ENCODE measurements at regions of chr22 and their contacts with region 1.

Region 1: DNA sequence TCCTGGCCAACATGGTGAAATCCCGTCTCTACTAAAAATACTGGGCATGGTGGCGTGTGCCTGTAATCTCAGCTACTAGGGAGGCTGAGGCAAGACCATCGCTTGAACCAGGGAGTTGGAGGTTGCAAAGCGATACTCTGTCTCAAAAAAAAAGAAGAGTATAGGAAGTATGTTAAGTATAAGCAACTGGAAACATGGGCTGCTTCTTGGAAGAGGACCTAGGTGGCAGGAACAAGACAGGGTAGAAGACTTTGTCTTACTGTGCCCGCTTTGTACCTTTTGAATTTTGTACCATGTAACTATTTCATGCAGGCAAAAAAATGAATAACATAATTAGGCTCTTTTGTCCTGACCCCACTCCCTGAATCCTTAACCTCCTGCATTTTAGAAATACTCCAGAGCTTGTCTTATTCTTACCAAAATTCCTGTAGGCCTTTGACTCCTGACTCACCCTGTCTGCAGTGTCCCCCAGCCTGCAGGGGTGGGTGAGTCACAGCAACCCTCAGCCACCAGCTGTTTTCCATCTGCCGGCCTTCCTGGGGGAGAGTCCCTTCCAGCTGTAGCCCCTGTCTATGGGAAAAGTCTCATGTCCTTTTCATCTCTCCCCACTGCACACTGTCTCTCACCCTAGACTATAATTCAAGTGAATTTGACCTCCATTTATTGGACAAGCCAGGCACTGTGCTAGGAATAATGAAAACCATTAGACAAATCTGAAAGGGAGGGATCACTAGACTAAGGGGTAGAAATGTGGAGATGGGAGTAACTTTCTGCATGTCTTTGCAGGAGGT is 41.8 kb downstream of the TXN2 start:
- DNase-seq: peak in 1 of 2 experiments; percentile 40
- H3K4me3 ChIP-seq: no peak overlapping the region
- H3K4me3 Mint-ChIP-seq: no peak overlapping the region
- H3K27ac Mint-ChIP-seq: peak overlapping the region; percentile 13
- H3K4me1 ChIP-seq: peaks cover 38% of the 10 kb centered on the region
- H3K4me1 Mint-ChIP-seq: peaks cover 33% of the 10 kb centered on the region
- H3K27me3 ChIP-seq: no peaks in the 10 kb centered on the region
- H3K27me3 Mint-ChIP-seq: no peaks in the 10 kb centered on the region
- CTCF ChIP-seq: no peak

Region 2: DNA sequence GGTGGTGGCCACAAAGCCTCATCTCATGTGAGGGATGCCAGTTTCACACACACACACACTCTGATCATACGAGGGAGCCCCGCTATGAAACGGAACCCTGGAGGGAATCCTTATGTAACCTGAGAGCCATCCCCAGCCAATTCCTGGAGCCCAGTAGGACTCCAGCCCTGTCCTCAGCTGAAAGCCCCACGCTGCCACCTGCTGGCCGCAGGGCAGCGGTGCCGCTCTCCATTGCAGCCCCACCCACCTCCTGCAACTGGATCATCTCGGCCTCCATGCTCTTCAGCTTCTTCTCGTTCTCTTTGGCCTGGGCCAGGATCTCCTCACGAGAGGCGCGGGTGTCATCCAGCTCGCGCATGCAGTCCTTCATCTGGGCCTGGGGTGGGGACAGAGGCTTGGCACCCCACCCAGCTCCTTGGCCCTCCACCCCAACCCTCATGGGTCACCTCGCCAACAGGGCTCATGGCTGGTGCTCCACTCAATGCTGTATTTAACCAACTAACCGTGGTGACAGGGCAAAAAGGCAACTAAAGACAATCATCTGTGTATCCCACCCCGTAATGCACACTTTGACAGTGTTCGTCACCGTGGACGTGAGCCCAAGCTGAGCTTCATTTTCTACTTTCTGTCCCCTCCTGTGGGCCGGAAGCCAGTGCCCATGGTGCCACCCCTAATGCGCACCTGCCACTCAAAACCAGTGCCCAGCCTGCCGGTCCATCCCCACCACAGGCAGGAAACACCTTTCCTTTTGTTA is 153.0 kb before region 1 on chr22:
- CTCF ChIA-PET with region 1: no interaction called
- POLR2A ChIA-PET with region 1: interaction called, 10 read pairs
- intact Hi-C with region 1: no loop called
- DNase-seq: peak; percentile 77 to 86
- H3K4me3 ChIP-seq: no peak overlapping the region
- H3K4me3 Mint-ChIP-seq: no peak overlapping the region
- H3K27ac Mint-ChIP-seq: peak overlapping the region; percentile 35
- H3K4me1 ChIP-seq: no peaks in the 10 kb centered on the region
- H3K4me1 Mint-ChIP-seq: peaks cover 5% of the 10 kb centered on the region
- H3K27me3 ChIP-seq: no peaks in the 10 kb centered on the region
- H3K27me3 Mint-ChIP-seq: no peaks in the 10 kb centered on the region
- CTCF ChIP-seq: peak; percentile 87 to 93

Region 3: DNA sequence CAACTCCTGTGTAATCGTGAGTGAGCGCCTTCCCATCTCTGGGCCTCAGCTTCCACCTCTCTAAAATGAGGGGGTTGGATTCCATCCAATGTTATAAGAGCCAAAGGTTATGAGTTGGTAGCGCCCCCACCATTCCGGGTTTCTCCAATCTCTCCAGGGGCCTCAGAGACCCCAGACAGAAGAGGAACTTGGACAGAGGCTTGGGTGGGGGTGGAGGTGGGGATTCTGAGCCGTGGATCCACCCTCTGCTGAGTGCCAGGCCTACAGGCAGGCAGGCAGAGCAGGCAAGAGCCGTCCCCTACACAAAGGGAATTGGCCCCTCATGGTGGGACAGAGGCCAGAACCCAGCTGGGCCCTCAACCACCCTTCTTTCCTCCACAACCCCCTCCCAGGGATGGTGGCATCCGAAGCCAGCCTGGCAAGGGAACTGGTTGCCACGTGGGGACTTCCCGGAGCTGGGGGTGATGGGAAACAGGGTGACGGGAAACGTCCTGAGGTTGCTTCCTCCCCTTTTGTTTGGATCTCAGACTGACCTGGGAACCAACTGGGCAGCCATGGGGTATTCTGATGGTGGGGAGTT is 10.0 kb after region 1 on chr22:
- CTCF ChIA-PET with region 1: no interaction called
- POLR2A ChIA-PET with region 1: no interaction called
- intact Hi-C with region 1: no loop called
- DNase-seq: no peak
- H3K4me3 ChIP-seq: no peak overlapping the region
- H3K4me3 Mint-ChIP-seq: no peak overlapping the region
- H3K27ac Mint-ChIP-seq: no peak overlapping the region
- H3K4me1 ChIP-seq: peaks cover 9% of the 10 kb centered on the region; the same call in 1 of the 2 replicates
- H3K4me1 Mint-ChIP-seq: peaks cover 7% of the 10 kb centered on the region
- H3K27me3 ChIP-seq: no peaks in the 10 kb centered on the region
- H3K27me3 Mint-ChIP-seq: no peaks in the 10 kb centered on the region
- CTCF ChIP-seq: no peak